HepG2 (cell line): ENCODE measurements at regions of chr3 and their contacts with region 1.

Region 1: DNA sequence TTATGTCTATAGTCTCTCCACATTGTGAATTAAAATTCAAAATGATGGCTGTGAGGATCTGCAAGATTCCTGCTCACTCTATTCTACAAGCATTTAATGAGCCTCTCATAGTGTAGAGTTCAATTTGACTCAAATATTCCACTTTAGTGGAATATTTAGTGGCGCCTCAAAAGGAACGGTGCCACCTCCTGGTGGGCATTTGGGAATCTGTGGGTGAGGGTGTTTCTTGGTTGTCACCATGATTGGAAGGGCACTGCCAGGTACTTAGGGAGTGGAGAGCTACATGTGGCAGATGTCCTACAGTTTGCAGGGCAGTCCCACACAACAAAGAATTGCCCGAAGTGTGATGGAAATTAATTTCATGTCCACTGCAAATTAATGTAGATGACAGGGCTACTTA is 21.5 kb upstream of the KCNMB3 start:
- DNase-seq: no peak
- ATAC-seq: peak; percentile 60
- H3K4me3 ChIP-seq: no peak overlapping the region
- H3K27ac ChIP-seq: no peak overlapping the region
- H3K4me1 ChIP-seq: peaks cover 20% of the 10 kb centered on the region
- H3K27me3 ChIP-seq: no peaks in the 10 kb centered on the region; a peak in 1 of 5 replicates
- CTCF ChIP-seq: peak; percentile 62
- EP300 ChIP-seq: no peak
- POLR2A ChIP-seq: no peak
- RAD21 ChIP-seq: no peak

Region 2: GRCh38 chr3:179105881-179106280 is 166.5 kb before region 1 on chr3:
- CTCF ChIA-PET with region 1: no interaction called
- POLR2A ChIA-PET with region 1: no interaction called
- in situ Hi-C with region 1: no loop called
- intact Hi-C with region 1: loop called (anchors 1 kb)
- DNase-seq: no peak
- ATAC-seq: no peak
- H3K4me3 ChIP-seq: no peak overlapping the region
- H3K27ac ChIP-seq: no peak overlapping the region
- H3K4me1 ChIP-seq: no peaks in the 10 kb centered on the region
- H3K27me3 ChIP-seq: no peaks in the 10 kb centered on the region; a peak in 1 of 5 replicates
- CTCF ChIP-seq: no peak
- EP300 ChIP-seq: no peak
- POLR2A ChIP-seq: no peak
- RAD21 ChIP-seq: no peak

Region 3: DNA sequence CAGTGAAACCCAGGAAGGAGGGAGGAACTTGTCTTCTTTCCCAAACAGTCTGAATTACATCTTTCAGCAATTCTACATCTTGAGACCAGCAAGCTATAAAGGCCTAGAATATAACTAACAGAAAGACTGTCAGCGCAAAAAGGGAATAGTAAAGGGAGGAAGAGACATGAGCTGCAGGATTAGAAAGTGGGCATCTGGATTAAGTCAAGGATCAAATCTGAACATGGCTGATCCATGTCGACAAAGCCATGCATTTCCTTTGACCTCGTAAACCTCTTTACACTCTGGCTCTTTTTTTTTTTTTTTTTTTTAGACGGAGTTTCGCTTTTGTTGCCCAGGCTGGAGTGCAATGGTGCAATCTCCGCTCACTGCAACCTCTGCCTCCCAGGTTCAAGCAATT is 13.9 kb after region 1 on chr3:
- CTCF ChIA-PET with region 1: no interaction called
- POLR2A ChIA-PET with region 1: no interaction called
- in situ Hi-C with region 1: no loop called
- intact Hi-C with region 1: no loop called
- DNase-seq: no peak
- ATAC-seq: no peak
- H3K4me3 ChIP-seq: no peak overlapping the region
- H3K27ac ChIP-seq: no peak overlapping the region
- H3K4me1 ChIP-seq: no peaks in the 10 kb centered on the region
- H3K27me3 ChIP-seq: no peaks in the 10 kb centered on the region
- CTCF ChIP-seq: no peak
- EP300 ChIP-seq: no peak
- POLR2A ChIP-seq: no peak
- RAD21 ChIP-seq: no peak